ENCODE measurements at regions of chr4 and their contacts with region 1.

Region 1: DNA sequence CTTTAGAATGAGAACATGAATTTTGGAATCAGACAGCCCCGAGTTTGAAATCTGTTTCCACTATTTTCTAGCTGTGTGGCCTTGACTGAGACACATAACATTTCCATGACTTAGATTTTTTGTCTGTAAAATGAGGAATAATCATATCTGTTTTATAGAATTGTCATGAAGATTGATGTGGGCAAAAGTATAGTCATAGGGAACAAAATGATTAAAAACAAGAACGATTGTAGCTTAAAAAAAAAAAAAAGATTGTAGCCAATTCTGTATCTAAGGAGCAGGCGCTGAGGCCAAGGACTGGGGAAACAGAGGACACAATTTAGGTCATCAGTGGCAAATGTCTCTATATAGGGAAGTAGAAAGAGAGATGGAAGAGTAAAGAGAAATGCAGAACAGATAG is 201.6 kb upstream of the C1QTNF7 start:
- DNase-seq: no peak
- ATAC-seq: no peak
- H3K4me3 ChIP-seq: no peak overlapping the region
- H3K4me3 Mint-ChIP-seq: no peak overlapping the region
- H3K27ac ChIP-seq: no peak overlapping the region
- H3K27ac Mint-ChIP-seq: no peak overlapping the region
- H3K4me1 ChIP-seq: no peaks in the 10 kb centered on the region
- H3K4me1 Mint-ChIP-seq: no peaks in the 10 kb centered on the region
- H3K27me3 ChIP-seq: no peaks in the 10 kb centered on the region
- H3K27me3 Mint-ChIP-seq: no peaks in the 10 kb centered on the region

Region 2: GRCh38 chr4:15213302-15213970 is 12.8 kb before region 1 on chr4:
- CTCF ChIA-PET with region 1: interaction called in 1 of 2 experiments, 4 read pairs
- POLR2A ChIA-PET with region 1: interaction called in 1 of 2 experiments, 11 read pairs
- DNase-seq: no peak
- ATAC-seq: no peak
- H3K4me3 ChIP-seq: no peak overlapping the region
- H3K4me3 Mint-ChIP-seq: no peak overlapping the region
- H3K27ac ChIP-seq: no peak overlapping the region
- H3K27ac Mint-ChIP-seq: no peak overlapping the region
- H3K4me1 ChIP-seq: no peaks in the 10 kb centered on the region
- H3K4me1 Mint-ChIP-seq: no peaks in the 10 kb centered on the region
- H3K27me3 ChIP-seq: peaks cover 0 to 3% of the 10 kb centered on the region in 2 experiments
- H3K27me3 Mint-ChIP-seq: peaks cover 9 to 11% of the 10 kb centered on the region in 2 donors

Region 3: GRCh38 chr4:15427701-15428100 is 201.5 kb after region 1 on chr4 and contains the start of gene C1QTNF7:
- CTCF ChIA-PET with region 1: no interaction called
- POLR2A ChIA-PET with region 1: no interaction called
- DNase-seq: no peak
- ATAC-seq: no peak
- H3K4me3 ChIP-seq: no peak within 1 kb of the TSS
- H3K4me3 Mint-ChIP-seq: no peak within 1 kb of the TSS
- H3K27ac ChIP-seq: no peak within 1 kb of the TSS
- H3K27ac Mint-ChIP-seq: no peak within 1 kb of the TSS
- H3K4me1 ChIP-seq: no peaks in the 10 kb centered on the region
- H3K4me1 Mint-ChIP-seq: peaks cover 5 to 15% (median 7%) of the 10 kb centered on the region in 3 donors
- H3K27me3 ChIP-seq: no peaks in the 10 kb centered on the region
- H3K27me3 Mint-ChIP-seq: peaks cover 0 to 1% of the 10 kb centered on the region in 2 donors
- total RNA-seq, gene C1QTNF7: not detected

Region 4: GRCh38 chr4:15681207-15682015 is 455.2 kb after region 1 on chr4 and contains the start of gene FAM200B:
- CTCF ChIA-PET with region 1: no interaction called
- POLR2A ChIA-PET with region 1: no interaction called
- DNase-seq: peak; percentile 82 to 98 (median 92)
- ATAC-seq: peak; percentile 95 to 99 (median 98)
- H3K4me3 ChIP-seq: peak within 1 kb of the TSS; percentile 82 to 97
- H3K4me3 Mint-ChIP-seq: peak within 1 kb of the TSS; percentile 97 to 100 (median 98)
- H3K27ac ChIP-seq: peak within 1 kb of the TSS; percentile 85
- H3K27ac Mint-ChIP-seq: peak within 1 kb of the TSS; percentile 97 to 98
- H3K4me1 ChIP-seq: peaks cover 7 to 18% of the 10 kb centered on the region in 2 experiments
- H3K4me1 Mint-ChIP-seq: peaks cover 38 to 40% (median 40%) of the 10 kb centered on the region in 3 donors
- H3K27me3 ChIP-seq: no peaks in the 10 kb centered on the region
- H3K27me3 Mint-ChIP-seq: no peaks in the 10 kb centered on the region
- total RNA-seq, gene FAM200B: 19.1 to 29.4 (median 20.7) TPM